ENCODE measurements at regions of chr10 and their contacts with region 1.

Region 1: DNA sequence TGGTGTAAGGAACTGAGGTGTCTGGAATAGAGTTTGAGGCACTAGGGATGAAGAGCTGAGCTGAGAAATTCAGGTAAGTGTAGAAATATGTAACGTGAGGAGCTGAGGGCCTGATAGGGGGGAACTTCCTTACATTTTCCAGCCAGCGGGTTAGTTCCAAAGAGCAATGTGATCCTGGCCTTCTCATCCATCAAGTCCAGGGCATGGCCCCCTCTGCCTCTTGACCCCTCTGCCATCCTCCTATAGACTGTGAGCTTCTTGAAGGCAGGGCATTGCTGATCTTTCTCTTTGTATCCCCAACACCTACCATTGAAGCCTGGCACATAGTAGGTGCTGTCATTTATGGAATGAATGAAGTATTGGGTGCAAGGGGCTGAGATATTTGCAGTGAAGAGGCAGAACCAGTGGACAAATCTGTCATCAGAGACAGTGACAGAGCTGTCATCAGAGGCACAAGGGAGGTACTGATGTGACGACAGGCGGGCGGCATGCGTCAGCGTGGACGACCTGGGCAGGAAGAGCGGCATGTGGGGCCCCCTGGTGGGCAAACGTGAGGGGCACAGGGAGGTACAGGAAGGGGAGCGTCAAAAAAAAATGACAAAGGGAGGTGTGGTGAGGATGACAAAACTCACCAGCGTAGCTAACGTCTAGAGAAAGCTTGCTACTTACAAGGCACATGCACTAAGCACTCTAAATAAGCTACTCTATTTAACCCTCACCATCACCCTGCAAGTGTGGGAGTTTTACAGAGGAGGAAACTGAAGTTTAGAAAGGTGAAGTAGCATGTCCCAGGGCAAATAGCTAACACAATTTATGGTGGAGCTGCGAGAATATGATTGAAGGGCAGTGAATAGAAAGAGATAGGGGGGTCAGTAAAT is 5.2 kb upstream of the CAMK2G start:
- DNase-seq: peak; percentile 96
- ATAC-seq: peak; percentile 92
- H3K4me3 Mint-ChIP-seq: peak overlapping the region; percentile 1
- H3K27ac Mint-ChIP-seq: peak overlapping the region; percentile 59
- H3K4me1 Mint-ChIP-seq: peaks cover 44% of the 10 kb centered on the region
- H3K27me3 Mint-ChIP-seq: peaks cover 5% of the 10 kb centered on the region

Region 2: DNA sequence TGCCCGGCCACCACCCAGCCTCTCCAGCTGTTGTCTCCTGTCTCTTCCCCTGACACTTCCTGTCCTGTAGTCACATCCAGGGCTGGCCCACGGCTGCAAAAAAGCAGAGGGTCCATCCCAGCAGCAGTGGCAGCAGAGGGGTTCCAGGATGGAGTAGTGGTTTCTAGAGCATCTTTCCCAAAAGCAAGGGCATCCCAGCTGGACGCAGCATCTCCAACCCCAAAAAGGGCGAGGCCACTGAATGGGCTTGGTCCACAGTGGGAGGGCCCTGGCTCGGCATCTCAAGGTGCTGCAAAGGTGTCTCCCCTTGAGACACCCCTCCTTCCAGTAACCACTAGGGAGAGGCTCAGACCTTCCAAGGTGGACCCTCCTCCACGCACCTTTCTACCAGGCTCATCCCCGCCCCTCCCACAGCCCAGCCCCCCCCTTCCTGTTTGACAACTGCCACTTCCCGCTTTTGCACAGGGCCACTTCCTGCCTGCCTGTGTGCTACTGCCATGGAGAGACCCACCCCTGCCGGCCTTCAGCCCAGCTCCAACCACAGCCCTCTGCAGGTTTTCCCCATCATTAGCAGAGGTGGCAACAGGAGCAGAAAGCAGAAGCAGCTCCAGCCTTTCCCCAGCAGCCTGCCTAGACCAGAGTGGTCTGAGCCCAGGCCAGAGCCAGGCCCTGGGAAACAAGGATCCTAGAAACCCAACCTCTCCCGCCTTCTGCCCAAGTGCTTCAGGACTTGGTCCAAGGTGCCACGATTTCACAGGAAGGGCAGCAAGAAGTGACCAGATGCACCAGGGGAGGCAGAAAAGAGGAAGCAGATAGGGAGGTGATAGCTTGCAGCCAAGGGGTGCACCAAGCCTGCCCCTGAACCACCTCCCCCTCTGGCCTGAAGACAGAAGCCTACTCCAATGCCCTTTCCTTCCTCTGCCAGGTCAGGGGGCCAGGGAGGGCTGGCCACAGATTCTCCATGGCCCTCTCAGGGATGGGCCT is 13.8 kb before region 1 on chr10:
- POLR2A ChIA-PET with region 1: interaction called, 22 read pairs
- DNase-seq: peak; percentile 59
- ATAC-seq: peak; percentile 87
- H3K4me3 Mint-ChIP-seq: peak overlapping the region; percentile 77
- H3K27ac Mint-ChIP-seq: peak overlapping the region; percentile 98
- H3K4me1 Mint-ChIP-seq: peaks cover 61% of the 10 kb centered on the region
- H3K27me3 Mint-ChIP-seq: no peaks in the 10 kb centered on the region

Region 3: DNA sequence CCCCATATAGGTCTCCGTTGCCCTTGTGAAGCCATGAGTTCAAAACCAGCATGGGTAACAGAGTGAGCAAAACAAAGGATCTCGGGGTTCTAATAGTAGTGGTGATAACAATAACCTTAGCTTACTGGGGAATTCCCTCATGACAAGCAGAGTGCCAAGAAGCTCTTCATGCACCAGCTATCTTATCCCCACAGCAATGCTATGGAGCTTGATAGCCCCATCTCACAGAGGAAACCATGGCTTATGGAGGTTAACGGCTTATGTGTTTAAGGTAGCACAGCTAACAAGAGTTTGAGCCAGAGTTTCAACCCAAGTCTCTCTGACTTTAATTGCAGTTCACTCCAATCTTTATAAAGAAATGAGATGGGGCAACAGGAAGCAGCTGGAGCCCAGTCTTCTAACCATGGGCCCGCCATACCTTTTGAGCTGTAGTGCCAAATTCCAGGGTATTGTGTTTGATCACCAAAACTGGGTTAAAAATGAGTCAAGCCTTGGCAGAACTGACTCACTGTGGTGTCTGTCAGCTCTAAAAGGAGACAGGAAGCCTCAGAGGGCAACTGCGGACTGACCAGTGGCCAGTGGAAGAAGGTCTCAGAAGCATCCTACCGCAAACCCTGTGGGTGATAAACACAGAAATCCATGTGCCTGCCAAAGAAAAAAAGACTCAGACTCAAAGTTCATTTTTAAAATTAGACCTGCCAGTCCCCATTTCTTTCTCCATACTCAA is 14.9 kb after region 1 on chr10:
- POLR2A ChIA-PET with region 1: no interaction called
- DNase-seq: no peak
- ATAC-seq: no peak
- H3K4me3 Mint-ChIP-seq: no peak overlapping the region
- H3K27ac Mint-ChIP-seq: no peak overlapping the region
- H3K4me1 Mint-ChIP-seq: peaks cover 1% of the 10 kb centered on the region
- H3K27me3 Mint-ChIP-seq: peaks cover 18% of the 10 kb centered on the region